SK-N-SH (cell line): ENCODE measurements at regions of chr4 and their contacts with region 1.

Region 1: GRCh38 chr4:56544573-56545131 is 39.1 kb downstream of the ARL9 start:
- DNase-seq: peak; percentile 93
- H3K4me3 ChIP-seq: peak overlapping the region; percentile 44 to 52
- H3K27ac ChIP-seq: peak overlapping the region in 1 of 2 experiments; percentile 76; a peak in 2 of 4 replicates
- H3K4me1 ChIP-seq: no peaks in the 10 kb centered on the region
- H3K27me3 ChIP-seq: no peaks in the 10 kb centered on the region; the same call in 1 of the 2 replicates
- CTCF ChIP-seq: peak; percentile 97
- EP300 ChIP-seq: no peak
- RAD21 ChIP-seq: peak; percentile 80

Region 2: DNA sequence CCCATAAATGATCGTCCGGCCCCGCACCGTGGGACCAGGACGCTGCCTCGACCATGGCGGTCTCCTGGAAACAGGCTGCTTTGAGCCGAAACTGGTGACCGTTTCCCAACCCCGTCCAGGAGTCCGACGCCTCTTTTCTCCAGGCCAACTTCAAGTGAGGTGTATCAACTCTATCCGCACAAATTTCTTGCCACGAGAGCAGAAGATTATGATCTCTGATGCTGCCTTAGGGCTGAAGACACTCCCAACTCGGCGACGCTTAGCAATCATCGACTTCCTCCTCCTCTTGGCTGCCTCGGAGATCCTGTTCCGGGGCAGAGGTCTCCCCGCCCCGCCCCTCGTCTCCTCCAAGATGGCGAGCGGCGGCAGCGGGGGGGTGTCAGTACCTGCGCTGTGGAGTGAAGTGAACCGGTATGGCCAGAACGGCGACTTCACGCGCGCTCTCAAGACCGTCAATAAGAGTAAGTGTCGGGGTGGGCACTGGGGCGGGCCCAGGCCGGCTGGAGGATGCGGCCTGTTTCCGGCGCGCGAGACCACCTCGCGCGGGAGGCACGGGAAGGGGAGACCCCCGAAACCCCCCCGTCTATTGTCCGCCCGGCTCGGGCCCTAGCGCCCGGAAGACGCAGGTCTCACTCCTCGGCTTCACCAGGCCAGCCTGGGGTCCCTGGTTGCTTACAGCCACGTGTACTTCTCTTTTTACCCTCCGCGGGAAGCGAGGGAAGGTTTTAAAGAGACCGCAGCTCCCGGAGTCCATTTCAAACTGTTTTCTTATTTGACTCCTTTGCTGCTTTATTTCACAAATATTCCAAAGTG is 77.2 kb before region 1 on chr4 and contains the start of gene SRP72:
- CTCF ChIA-PET with region 1: interaction called, 10 read pairs
- POLR2A ChIA-PET with region 1: no interaction called
- DNase-seq: peak; percentile 92
- H3K4me3 ChIP-seq: peak within 1 kb of the TSS; percentile 75 to 80
- H3K27ac ChIP-seq: peak within 1 kb of the TSS; percentile 91 to 96
- H3K4me1 ChIP-seq: peaks cover 0 to 18% of the 10 kb centered on the region in 2 experiments; a peak in 2 of 4 replicates
- H3K27me3 ChIP-seq: no peaks in the 10 kb centered on the region
- CTCF ChIP-seq: no peak
- EP300 ChIP-seq: no peak
- RAD21 ChIP-seq: no peak
- polyA plus RNA-seq, gene SRP72: 47.6 and 69.2 TPM in 2 replicates

Region 3: DNA sequence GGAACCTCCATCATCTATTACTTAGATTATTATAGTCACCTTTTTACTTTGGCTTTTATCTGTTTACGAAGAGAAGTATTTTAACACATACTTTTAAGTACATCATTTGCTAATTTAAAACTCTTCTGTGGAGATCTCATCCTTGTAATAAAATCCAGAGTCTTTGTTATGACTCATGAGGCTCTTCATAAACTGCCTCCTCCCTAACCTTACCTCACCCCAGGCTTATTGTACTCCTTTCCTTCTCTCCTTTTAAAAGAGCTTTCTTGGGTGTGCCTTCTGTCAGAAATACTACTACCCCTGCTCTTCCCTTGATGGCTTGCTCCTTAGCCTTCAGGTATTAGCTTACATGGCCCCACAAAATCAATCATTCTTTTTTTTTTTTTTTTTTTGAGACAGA is 32.5 kb before region 1 on chr4:
- CTCF ChIA-PET with region 1: interaction called, 15 read pairs
- POLR2A ChIA-PET with region 1: no interaction called
- DNase-seq: no peak
- H3K4me3 ChIP-seq: no peak overlapping the region
- H3K27ac ChIP-seq: no peak overlapping the region
- H3K4me1 ChIP-seq: no peaks in the 10 kb centered on the region
- H3K27me3 ChIP-seq: no peaks in the 10 kb centered on the region
- CTCF ChIP-seq: no peak
- EP300 ChIP-seq: no peak
- RAD21 ChIP-seq: no peak

Region 4: GRCh38 chr4:56530269-56531148 is 14.1 kb before region 1 on chr4:
- CTCF ChIA-PET with region 1: interaction called, 37 read pairs
- POLR2A ChIA-PET with region 1: interaction called, 8 read pairs
- DNase-seq: peak; percentile 97
- H3K4me3 ChIP-seq: peak overlapping the region; percentile 64 to 84
- H3K27ac ChIP-seq: peak overlapping the region in 1 of 2 experiments; percentile 67; a peak in 2 of 4 replicates
- H3K4me1 ChIP-seq: peaks cover 0 to 11% of the 10 kb centered on the region in 2 experiments; a peak in 1 of 4 replicates
- H3K27me3 ChIP-seq: no peaks in the 10 kb centered on the region
- CTCF ChIP-seq: no peak
- EP300 ChIP-seq: peak in 1 of 2 experiments; percentile 81; a peak in 2 of 4 replicates
- RAD21 ChIP-seq: no peak

Region 5: DNA sequence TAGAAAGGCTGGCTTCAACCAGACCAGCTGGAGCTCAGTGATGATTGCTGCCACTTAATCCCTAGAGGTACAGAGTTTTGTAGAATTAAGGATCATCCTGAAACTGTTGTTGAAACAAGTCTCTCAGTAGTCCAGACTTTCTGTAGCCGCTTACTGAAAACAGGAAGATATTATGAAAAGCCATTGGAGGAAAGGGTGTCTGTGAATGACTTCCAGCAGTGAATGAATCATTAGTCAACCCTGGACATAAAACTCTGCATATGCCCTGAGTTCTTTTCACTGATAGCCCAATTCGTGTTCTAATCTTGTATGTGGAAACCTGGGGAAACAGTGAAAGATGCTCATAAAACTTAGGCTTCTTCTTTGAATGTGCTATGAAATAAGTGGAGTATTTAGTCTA is 121.6 kb after region 1 on chr4:
- CTCF ChIA-PET with region 1: no interaction called
- POLR2A ChIA-PET with region 1: no interaction called
- DNase-seq: no peak
- H3K4me3 ChIP-seq: no peak overlapping the region
- H3K27ac ChIP-seq: no peak overlapping the region
- H3K4me1 ChIP-seq: no peaks in the 10 kb centered on the region
- H3K27me3 ChIP-seq: 0 out of 2 replicates have a peak, but pooled peaks cover 8% of the 10 kb centered on the region
- CTCF ChIP-seq: no peak
- EP300 ChIP-seq: no peak
- RAD21 ChIP-seq: no peak

Region 6: DNA sequence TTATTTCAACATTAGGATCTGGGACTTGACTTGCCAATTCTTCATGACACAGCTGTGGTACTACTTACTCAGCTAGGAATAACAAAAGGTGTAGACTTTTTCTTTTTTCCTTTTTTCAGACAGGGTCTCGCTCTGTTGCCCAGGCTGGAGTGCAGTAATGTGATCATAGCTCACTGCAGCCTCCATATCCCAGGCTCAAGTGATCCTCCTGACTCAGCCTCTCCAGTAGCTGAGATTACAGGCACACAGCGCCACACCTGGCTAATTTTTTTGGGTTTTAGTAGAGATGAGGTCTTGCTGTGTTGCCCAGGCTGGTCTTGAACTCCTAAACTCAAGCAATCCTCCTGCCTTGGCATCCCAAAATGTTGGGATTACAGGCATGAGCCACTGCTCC is 416.5 kb after region 1 on chr4:
- CTCF ChIA-PET with region 1: no interaction called
- POLR2A ChIA-PET with region 1: no interaction called
- DNase-seq: no peak
- H3K4me3 ChIP-seq: no peak overlapping the region
- H3K27ac ChIP-seq: no peak overlapping the region
- H3K4me1 ChIP-seq: no peaks in the 10 kb centered on the region
- H3K27me3 ChIP-seq: no peaks in the 10 kb centered on the region
- CTCF ChIP-seq: no peak
- EP300 ChIP-seq: no peak
- RAD21 ChIP-seq: no peak

Region 7: DNA sequence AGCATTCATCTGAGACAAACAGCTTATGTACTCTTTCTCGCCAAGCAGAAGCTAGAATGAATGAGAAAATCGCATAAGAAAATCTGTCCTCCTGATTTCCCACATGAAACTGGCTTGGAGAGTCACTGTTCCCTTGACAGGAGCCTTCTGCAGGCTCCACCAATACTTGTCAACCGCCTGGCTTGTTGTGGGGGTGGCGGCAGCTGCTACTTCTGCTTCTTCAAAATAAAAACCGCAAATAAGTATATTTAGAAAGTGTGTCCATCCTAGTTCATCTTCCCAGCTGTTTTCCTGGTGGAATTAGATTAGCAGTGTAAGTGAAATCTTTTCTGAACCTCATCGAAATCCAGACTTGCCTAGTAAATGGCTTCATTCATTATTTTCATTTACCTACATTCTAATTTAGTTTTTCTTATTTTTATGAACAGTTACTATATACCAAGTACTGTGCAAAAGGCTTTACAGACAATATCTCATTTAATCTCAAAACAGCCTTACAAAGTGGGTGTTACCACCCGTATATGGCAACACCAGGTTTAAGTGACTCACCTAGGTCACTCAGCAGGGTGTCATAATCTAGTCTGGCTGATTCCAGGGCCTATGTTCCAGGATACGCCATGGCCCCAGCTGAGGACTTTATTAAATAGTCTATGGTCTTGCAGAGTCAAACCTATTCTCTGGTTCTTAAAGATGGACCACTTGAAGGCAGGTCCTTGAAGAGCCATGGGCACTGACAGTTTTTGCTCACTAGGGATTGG is 670.2 kb after region 1 on chr4:
- CTCF ChIA-PET with region 1: no interaction called
- POLR2A ChIA-PET with region 1: no interaction called
- DNase-seq: no peak
- H3K4me3 ChIP-seq: no peak overlapping the region
- H3K27ac ChIP-seq: no peak overlapping the region
- H3K4me1 ChIP-seq: no peaks in the 10 kb centered on the region
- H3K27me3 ChIP-seq: no peaks in the 10 kb centered on the region
- CTCF ChIP-seq: no peak
- EP300 ChIP-seq: no peak
- RAD21 ChIP-seq: no peak